ENCODE measurements at regions of chr2 and their contacts with region 1.

Region 1: GRCh38 chr2:17821535-17822444 is 5.5 kb downstream of the MSGN1 start:
- DNase-seq: no peak
- ATAC-seq: no peak
- H3K4me3 ChIP-seq: no peak overlapping the region
- H3K27ac ChIP-seq: no peak overlapping the region
- H3K4me1 ChIP-seq: peaks cover 7 to 13% of the 10 kb centered on the region in 2 donors
- H3K27me3 ChIP-seq: no peaks in the 10 kb centered on the region
- CTCF ChIP-seq: no peak

Region 2: DNA sequence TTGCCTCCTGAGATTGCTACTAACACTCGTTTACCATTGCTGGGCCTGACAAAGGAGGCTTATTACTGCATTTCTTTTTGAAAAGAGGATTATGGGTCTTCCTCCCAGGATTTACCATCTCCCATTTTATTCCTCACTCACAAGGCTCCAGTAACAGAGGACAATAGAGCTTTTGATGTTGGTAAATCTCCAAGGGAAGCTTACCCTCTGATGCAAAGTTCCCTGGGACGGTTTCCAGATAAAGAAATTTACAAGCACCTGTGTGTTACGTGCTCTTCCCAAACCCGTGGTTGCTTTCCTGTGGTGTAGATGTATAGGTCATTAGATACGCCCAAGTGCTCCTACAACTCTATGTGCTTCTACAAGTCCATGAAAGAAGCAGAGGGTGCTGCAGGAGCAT is 264.2 kb before region 1 on chr2:
- intact Hi-C with region 1: no loop called
- DNase-seq: no peak
- ATAC-seq: no peak
- H3K4me3 ChIP-seq: no peak overlapping the region
- H3K27ac ChIP-seq: no peak overlapping the region
- H3K4me1 ChIP-seq: no peaks in the 10 kb centered on the region
- H3K27me3 ChIP-seq: no peaks in the 10 kb centered on the region
- CTCF ChIP-seq: no peak

Region 3: DNA sequence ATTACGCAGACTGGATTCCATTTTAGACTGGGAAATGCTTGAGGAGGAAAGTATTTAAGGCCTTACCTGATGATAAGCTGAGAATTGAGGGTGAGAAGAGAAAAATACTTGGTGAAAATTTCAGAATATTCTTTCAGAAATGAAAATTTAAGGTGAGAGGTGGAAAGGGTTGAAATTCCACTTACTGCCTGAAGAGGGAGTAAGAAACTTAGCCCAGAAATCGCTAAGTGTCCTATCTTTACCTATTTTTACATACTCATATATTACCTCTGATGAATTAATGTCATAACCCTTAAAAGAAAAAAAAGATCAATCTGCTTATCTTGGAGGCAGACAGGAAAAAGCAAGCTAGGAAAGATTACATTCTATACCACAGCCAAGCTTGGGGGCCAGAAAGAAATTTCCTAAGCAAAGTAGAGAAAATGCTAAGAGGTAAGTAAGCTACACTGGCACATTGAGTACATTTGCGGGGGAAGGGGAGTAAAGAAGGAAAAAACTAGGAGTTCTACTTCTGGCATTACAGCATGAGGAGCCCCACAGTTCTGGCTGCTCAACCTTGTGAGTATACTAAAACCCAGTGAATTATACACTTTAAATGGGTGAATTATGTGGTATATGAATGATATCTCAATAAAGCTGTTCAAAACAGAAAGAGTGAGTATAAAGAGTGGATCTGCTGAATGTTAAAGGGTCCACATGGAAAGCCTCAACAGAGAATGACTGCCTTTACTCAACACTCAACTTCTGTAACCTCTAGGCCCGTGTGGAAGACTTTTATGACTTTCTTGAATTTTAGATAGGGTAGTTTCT is 102.0 kb before region 1 on chr2:
- intact Hi-C with region 1: loop called in 1 of 2 experiments (anchors 10 kb)
- DNase-seq: peak in 1 of 4 donors; percentile 6
- ATAC-seq: peak; percentile 64
- H3K4me3 ChIP-seq: no peak overlapping the region
- H3K27ac ChIP-seq: no peak overlapping the region
- H3K4me1 ChIP-seq: no peaks in the 10 kb centered on the region
- H3K27me3 ChIP-seq: no peaks in the 10 kb centered on the region
- CTCF ChIP-seq: peak; percentile 69 to 84

Region 4: GRCh38 chr2:18209919-18210639 is 388.3 kb after region 1 on chr2:
- intact Hi-C with region 1: no loop called
- DNase-seq: no peak
- ATAC-seq: no peak
- H3K4me3 ChIP-seq: no peak overlapping the region
- H3K27ac ChIP-seq: no peak overlapping the region
- H3K4me1 ChIP-seq: no peaks in the 10 kb centered on the region
- H3K27me3 ChIP-seq: no peaks in the 10 kb centered on the region
- CTCF ChIP-seq: no peak

Measured in left lung (tissue), 14 donors.